Activated naive CD4-positive, alpha-beta T cell treated with anti-CD3 and anti-CD28 coated beads, Interleukin-2, amount 10 ng/mL, durations not matched to agents 7 days and 5 days (primary cell): ENCODE measurements at regions of chr1 and their contacts with region 1.

Region 1: GRCh38 chr1:147273409-147274336 is 31.2 kb downstream of the CHD1L start:
- DNase-seq: peak; percentile 46
- H3K4me3 Mint-ChIP-seq: no peak overlapping the region
- H3K27ac Mint-ChIP-seq: no peak overlapping the region
- H3K4me1 Mint-ChIP-seq: peaks cover 3% of the 10 kb centered on the region
- H3K27me3 Mint-ChIP-seq: no peaks in the 10 kb centered on the region

Region 2: DNA sequence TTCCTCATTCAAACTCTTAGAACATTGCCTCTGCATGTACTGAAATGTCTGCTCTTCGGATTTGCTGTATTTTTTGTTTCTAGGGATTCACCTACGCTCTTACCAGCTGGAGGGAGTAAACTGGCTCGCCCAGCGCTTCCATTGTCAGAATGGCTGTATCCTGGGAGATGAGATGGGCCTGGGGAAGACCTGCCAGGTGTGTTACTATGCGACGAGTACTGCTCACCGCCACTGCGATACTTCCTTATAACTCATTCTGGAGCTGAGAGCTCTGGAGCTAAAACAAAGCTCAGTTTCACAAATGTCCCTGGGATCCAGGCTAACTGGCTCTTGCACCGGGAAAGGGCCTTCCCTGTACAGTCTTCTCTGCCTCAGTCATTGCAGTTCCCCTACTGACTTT is 21.1 kb before region 1 on chr1:
- CTCF ChIA-PET with region 1: interaction called, 11 read pairs
- DNase-seq: no peak
- H3K4me3 Mint-ChIP-seq: no peak overlapping the region
- H3K27ac Mint-ChIP-seq: no peak overlapping the region
- H3K4me1 Mint-ChIP-seq: peaks cover 20% of the 10 kb centered on the region
- H3K27me3 Mint-ChIP-seq: no peaks in the 10 kb centered on the region

Region 3: DNA sequence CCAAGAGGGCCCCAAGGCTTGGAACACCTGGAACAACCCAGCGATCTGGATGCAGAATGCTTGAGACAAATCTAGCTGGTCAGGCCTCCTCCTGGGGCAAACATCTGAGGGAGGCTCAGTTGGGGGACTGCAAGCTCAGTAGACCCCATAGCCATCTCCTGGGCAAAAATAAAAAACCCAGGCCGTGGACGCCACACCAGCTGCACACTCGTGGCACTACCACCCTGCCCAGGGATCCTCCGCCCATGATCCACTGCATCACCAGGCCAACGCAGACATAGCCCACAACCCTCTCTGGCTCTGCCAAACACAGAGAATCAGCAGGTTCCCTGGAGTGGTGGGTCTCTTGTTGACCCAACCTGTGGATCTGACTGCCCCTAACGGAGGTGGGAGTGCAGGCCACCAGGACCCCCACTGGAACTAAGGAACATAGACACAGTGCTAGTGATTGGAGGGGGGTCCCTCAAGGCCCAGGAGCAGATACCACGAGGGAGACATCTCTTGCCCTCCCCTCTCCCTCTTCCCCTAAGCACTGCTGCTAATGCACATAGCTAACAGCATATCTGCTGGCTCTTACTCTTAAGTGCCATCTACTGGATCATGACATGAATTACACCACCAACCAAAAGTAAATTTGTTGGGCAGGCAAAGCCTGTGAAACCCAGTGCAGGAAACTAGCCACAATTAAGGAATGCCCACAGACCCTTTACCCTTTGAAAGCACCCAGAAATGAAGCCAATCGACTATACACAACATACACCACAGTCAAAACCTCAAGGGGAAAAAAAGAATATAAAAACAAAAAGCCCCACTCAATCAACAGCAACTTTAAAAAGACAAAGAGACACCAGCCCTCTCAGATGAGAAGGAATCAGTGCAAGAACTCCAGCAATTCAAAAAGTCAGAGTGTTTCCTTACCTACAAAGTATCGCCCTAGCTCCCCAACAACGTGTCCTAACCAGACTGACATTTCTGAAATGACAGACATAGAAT is 116.2 kb after region 1 on chr1:
- CTCF ChIA-PET with region 1: interaction called, 20 read pairs
- DNase-seq: no peak
- H3K4me3 Mint-ChIP-seq: no peak overlapping the region
- H3K27ac Mint-ChIP-seq: no peak overlapping the region
- H3K4me1 Mint-ChIP-seq: no peaks in the 10 kb centered on the region
- H3K27me3 Mint-ChIP-seq: peaks cover 21% of the 10 kb centered on the region

Region 4: GRCh38 chr1:147479864-147480564 is 206.3 kb after region 1 on chr1:
- CTCF ChIA-PET with region 1: no interaction called
- DNase-seq: no peak
- H3K4me3 Mint-ChIP-seq: no peak overlapping the region
- H3K27ac Mint-ChIP-seq: no peak overlapping the region
- H3K4me1 Mint-ChIP-seq: no peaks in the 10 kb centered on the region
- H3K27me3 Mint-ChIP-seq: peaks cover 13% of the 10 kb centered on the region

Region 5: GRCh38 chr1:147700042-147701006 is 426.7 kb after region 1 on chr1:
- CTCF ChIA-PET with region 1: no interaction called
- DNase-seq: peak; percentile 75
- H3K4me3 Mint-ChIP-seq: no peak overlapping the region
- H3K27ac Mint-ChIP-seq: no peak overlapping the region
- H3K4me1 Mint-ChIP-seq: peaks cover 11% of the 10 kb centered on the region
- H3K27me3 Mint-ChIP-seq: peaks cover 21% of the 10 kb centered on the region